Mucosa of descending colon (tissue), 3 donors: ENCODE measurements at regions of chr20 and their contacts with region 1.

Region 1: GRCh38 chr20:8131598-8132483 is at the start of gene PLCB1:
- DNase-seq: peak; percentile 70 to 84 (median 81)
- ATAC-seq: peak; percentile 94
- H3K4me3 ChIP-seq: peak within 1 kb of the TSS; percentile 26
- H3K4me1 ChIP-seq: peaks cover 7% of the 10 kb centered on the region
- CTCF ChIP-seq: peak; percentile 72
- total RNA-seq, gene PLCB1: 7.2 to 50.7 (median 8.8) TPM

Region 2: GRCh38 chr20:8389381-8390036 is 257.7 kb after region 1 on chr20:
- intact Hi-C with region 1: loop called in 1 of 2 experiments (anchors 10 kb)
- DNase-seq: no peak
- ATAC-seq: no peak
- H3K4me3 ChIP-seq: no peak overlapping the region
- H3K4me1 ChIP-seq: no peaks in the 10 kb centered on the region
- CTCF ChIP-seq: no peak

Region 3: GRCh38 chr20:8722276-8722928 is 590.6 kb after region 1 on chr20:
- intact Hi-C with region 1: loop called in 1 of 2 experiments (anchors 10 kb)
- DNase-seq: peak in 1 of 3 donors; percentile 64
- ATAC-seq: peak; percentile 63
- H3K4me3 ChIP-seq: no peak overlapping the region
- H3K4me1 ChIP-seq: no peaks in the 10 kb centered on the region
- CTCF ChIP-seq: no peak